Prostate gland (tissue), 2 donors: ENCODE measurements at regions of chr10 and their contacts with region 1.

Region 1: DNA sequence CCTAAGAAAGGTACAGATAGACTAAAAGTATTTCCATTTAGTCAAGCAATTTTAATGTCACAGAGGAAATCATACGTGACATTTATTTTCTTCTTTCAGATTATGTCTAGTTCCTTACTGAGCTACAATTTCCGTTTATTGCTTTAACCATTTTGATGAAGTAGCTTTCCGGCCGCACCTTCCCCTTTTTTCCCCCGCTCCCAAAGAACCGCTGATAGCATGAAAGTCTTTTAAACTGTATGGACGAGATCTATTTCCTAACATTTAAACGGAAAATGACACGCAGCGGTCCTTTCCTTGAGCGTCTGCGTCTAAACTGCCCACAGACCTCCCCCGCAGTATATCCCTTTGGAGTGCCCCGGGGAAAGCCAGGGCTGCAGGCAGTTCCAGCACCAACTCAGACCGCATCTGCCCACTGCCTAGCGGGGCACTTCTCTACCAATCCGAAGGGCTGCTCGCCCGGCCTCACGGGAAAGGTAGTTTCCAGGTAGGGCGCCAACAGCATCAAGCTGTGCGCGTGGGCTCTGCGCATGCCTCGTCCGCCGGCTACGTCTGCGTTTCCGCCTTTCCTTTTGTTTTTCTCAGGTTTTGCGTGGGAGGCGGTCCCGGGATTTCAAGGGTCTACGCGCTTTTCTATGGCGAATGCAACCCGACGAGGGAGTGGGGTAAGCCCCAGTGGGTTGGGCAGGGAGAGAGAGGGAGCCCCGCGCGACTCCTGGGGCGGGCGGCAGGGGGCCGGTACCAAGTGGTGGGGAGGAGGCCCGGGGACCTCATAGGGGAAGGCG is at the start of gene ZNF33A:
- DNase-seq: peak; percentile 95
- H3K4me3 ChIP-seq: peak within 1 kb of the TSS; percentile 90
- H3K27ac ChIP-seq: peak within 1 kb of the TSS; percentile 99 to 100
- H3K4me1 ChIP-seq: no peaks in the 10 kb centered on the region
- H3K27me3 ChIP-seq: no peaks in the 10 kb centered on the region
- CTCF ChIP-seq: peak in 1 of 4 experiments; percentile 13
- POLR2A ChIP-seq: peak; percentile 52
- total RNA-seq, gene ZNF33A: 24.9 to 39.2 TPM

Region 2: DNA sequence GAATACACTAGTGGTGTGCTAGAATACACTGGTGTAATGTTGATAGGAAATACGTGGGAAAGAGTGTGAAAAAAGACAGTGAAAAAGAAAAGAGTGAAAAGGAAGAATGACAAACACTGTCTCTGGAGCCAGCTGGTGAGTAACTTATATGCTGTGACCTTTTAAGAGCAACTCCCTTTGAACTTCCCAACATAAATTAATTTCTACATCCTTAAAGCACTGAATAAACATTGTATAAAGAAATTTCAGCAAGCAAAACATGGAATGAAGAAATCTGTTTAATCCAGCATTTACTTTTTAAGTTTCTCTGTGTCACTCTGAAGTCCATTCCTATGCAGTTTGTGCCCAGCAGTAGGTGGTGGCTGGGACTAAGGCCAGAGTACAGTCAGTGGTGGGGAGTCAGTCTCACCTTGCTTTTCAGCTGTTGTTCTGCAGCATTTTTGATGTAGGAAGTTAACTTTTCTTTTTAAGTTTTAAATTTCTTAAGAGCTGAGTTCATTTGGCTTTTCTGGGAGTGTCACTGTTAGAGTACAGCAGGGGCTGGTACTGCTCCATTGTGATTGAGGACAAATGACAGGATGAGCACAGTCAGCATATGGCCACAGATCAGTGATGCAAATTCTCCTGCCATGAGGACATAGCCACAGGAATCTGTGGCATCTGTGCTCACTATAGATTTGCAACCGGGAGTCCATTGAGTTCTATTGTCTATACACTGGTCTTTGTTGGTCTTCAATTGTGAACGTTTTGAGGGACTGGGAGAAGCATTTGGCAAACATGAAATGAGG is 474.7 kb before region 1 on chr10:
- intact Hi-C with region 1: no loop called
- DNase-seq: no peak
- H3K4me3 ChIP-seq: no peak overlapping the region
- H3K27ac ChIP-seq: no peak overlapping the region
- H3K4me1 ChIP-seq: no peaks in the 10 kb centered on the region
- H3K27me3 ChIP-seq: no peaks in the 10 kb centered on the region
- CTCF ChIP-seq: no peak
- POLR2A ChIP-seq: no peak

Region 3: GRCh38 chr10:37960591-37961137 is 49.6 kb before region 1 on chr10:
- intact Hi-C with region 1: no loop called
- DNase-seq: no peak
- H3K4me3 ChIP-seq: no peak overlapping the region
- H3K27ac ChIP-seq: no peak overlapping the region
- H3K4me1 ChIP-seq: no peaks in the 10 kb centered on the region
- H3K27me3 ChIP-seq: no peaks in the 10 kb centered on the region
- CTCF ChIP-seq: no peak
- POLR2A ChIP-seq: no peak

Region 4: GRCh38 chr10:37976091-37976879 is 34.0 kb before region 1 on chr10 and contains the start of gene ZNF25:
- intact Hi-C with region 1: loop called (anchors 5 kb)
- DNase-seq: peak; percentile 99
- H3K4me3 ChIP-seq: peak within 1 kb of the TSS; percentile 78 to 96
- H3K27ac ChIP-seq: peak within 1 kb of the TSS; percentile 96 to 99
- H3K4me1 ChIP-seq: no peaks in the 10 kb centered on the region
- H3K27me3 ChIP-seq: no peaks in the 10 kb centered on the region
- CTCF ChIP-seq: peak; percentile 82 to 98 (median 96)
- POLR2A ChIP-seq: peak; percentile 69
- total RNA-seq, gene ZNF25: 9.8 to 13.0 TPM

Region 5: DNA sequence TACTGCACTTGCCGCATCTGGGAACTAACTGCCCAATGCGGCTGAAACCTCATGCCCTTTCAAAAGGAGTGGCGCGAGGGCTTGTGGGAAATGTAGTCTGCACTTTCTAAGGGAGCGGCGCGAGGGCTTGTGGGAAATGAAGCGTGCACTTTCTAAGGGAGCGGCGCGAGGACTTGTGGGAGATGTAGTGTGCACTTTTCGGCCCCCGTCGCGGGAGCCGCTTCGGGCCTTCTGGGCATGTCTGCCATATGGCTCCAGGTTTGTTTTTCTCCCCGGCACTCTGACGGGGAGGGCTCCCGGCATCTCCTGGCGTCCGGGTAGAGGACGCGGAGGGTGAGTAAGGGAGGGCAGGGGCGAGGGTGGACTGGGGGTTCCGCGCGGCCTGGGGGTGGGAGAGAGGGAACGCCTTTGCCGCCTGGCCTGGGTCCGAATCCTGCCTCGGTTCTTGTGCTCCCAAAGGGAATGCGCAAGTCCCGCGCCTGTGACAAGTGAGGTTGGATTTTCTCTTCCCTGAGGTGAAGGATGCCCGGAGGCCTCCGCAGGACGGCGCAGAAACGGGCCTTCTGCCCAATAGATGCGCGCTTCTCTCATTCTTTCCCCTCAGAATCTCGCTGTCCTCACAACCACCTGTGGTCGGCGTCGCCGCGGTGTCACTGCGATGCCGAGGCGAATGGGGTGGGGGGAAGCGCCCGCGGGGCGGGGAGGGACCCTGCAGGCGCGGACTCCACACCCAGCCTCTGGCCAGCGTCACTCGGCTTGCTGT is 84.0 kb after region 1 on chr10 and contains the start of gene ZNF37A:
- intact Hi-C with region 1: loop called (anchors 10 kb)
- DNase-seq: peak; percentile 97
- H3K4me3 ChIP-seq: peak within 1 kb of the TSS; percentile 65 to 73
- H3K27ac ChIP-seq: peak within 1 kb of the TSS; percentile 84 to 86
- H3K4me1 ChIP-seq: no peaks in the 10 kb centered on the region
- H3K27me3 ChIP-seq: no peaks in the 10 kb centered on the region
- CTCF ChIP-seq: peak in 1 of 4 experiments; percentile 23
- POLR2A ChIP-seq: peak; percentile 70
- total RNA-seq, gene ZNF37A: 11.7 to 29.5 TPM